Activated naive CD4-positive, alpha-beta T cell treated with anti-CD3 and anti-CD28 coated beads, Interleukin-2, amount 10 ng/mL, durations not matched to agents 7 days and 5 days (primary cell): ENCODE measurements at regions of chr7 and their contacts with region 1.

Region 1: GRCh38 chr7:31122649-31123058 is 70.5 kb downstream of the ADCYAP1R1 start:
- DNase-seq: peak; percentile 63
- H3K4me3 Mint-ChIP-seq: no peak overlapping the region
- H3K27ac Mint-ChIP-seq: no peak overlapping the region
- H3K4me1 Mint-ChIP-seq: no peaks in the 10 kb centered on the region
- H3K27me3 Mint-ChIP-seq: peaks cover 38% of the 10 kb centered on the region

Region 2: GRCh38 chr7:30800785-30801252 is 321.8 kb before region 1 on chr7:
- CTCF ChIA-PET with region 1: interaction called, 26 read pairs
- DNase-seq: peak; percentile 60
- H3K4me3 Mint-ChIP-seq: no peak overlapping the region
- H3K27ac Mint-ChIP-seq: no peak overlapping the region
- H3K4me1 Mint-ChIP-seq: peaks cover 24% of the 10 kb centered on the region
- H3K27me3 Mint-ChIP-seq: no peaks in the 10 kb centered on the region

Region 3: DNA sequence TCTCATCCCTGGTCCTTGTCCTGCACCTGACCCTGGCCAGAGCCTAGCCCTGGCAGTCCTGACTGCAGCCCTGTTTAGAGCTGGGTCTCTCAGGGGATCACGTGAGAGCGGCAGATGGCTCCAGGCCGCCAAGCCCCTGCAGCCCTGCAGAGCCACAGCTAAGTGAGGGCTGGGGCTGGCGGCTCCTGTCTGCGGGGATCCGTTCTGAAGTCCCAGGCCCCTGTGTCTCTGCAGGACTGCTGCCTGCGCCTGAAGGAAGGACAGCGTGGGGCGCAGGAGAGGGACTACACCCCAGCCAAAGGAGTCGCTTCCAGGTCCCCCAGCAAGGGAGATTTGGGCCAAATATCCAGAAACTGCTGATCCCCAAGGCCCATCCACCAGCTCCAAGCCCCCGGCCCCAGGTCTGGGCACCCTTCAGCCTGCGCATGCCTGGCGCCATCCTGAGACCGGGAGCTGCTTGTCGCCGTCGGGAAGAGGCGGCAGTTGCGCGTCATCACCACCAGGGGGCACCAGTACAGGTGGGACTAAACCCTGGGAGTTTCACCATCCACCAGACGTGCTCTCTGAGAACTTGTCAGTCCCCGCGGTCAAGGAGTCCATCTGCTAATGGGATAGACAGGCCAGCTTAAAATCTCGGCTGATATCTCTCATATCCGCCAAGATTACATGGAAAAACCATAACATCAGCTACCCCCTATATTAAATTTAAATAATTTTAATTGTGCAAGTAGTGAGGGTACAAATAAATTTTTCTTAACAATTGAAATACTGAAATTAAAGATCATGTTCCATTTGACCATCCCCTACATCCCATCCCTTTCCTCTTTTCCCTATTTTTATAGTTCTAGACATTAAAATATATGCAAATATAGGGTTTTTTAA is 184.0 kb before region 1 on chr7:
- CTCF ChIA-PET with region 1: interaction called, 15 read pairs
- DNase-seq: peak; percentile 74
- H3K4me3 Mint-ChIP-seq: no peak overlapping the region
- H3K27ac Mint-ChIP-seq: no peak overlapping the region
- H3K4me1 Mint-ChIP-seq: no peaks in the 10 kb centered on the region
- H3K27me3 Mint-ChIP-seq: peaks cover 36% of the 10 kb centered on the region

Region 4: GRCh38 chr7:30974605-30975255 is 147.9 kb before region 1 on chr7:
- CTCF ChIA-PET with region 1: interaction called, 14 read pairs
- DNase-seq: peak; percentile 63
- H3K4me3 Mint-ChIP-seq: no peak overlapping the region
- H3K27ac Mint-ChIP-seq: no peak overlapping the region
- H3K4me1 Mint-ChIP-seq: peaks cover 7% of the 10 kb centered on the region
- H3K27me3 Mint-ChIP-seq: peaks cover 39% of the 10 kb centered on the region

Region 5: DNA sequence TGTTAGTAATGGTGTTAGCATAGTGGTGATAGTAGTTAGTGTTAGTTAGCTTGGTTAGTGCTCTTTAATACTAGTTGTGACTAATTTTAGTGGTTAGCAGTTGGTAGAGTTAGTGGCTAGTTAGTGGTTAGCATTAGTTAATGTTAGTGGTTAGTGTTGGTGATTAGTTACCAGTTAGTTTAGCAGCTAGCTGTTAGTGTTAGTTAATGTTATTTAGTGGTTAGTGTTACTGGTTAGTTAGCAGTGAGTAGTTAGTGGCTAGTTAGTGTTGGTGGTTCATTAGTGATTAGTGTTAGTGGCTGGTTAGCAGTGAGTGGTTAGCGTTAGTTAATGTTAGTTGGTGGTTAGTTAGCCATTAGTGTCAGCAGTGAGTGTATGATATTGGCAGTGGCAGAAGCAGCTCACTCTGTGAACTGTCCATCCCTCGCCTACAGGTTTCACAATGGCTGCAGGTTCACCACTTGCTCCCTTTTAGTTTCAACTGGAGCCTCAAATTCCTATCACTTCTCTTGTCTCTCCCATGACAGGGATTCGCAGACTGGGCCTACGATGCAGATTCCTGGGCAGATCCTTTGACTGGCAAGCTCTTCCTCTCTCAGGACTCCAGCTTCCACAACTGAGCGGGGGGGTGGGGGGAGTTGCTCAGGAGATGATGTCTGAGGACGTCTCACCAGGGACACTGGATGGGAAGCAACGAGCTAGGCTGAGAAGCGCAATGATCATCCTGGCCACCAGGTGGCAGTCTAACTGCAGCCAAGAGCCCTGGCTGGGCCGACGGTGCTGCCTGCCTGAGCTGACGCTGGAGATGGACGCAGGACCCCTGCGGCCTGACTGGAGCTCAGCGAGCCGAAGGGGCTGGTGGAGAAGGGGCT is 139.4 kb before region 1 on chr7:
- CTCF ChIA-PET with region 1: interaction called, 218 read pairs
- DNase-seq: peak; percentile 83
- H3K4me3 Mint-ChIP-seq: no peak overlapping the region
- H3K27ac Mint-ChIP-seq: no peak overlapping the region
- H3K4me1 Mint-ChIP-seq: peaks cover 12% of the 10 kb centered on the region
- H3K27me3 Mint-ChIP-seq: peaks cover 41% of the 10 kb centered on the region

Region 6: GRCh38 chr7:31106303-31107120 is 16.1 kb before region 1 on chr7:
- CTCF ChIA-PET with region 1: interaction called, 15 read pairs
- DNase-seq: no peak
- H3K4me3 Mint-ChIP-seq: no peak overlapping the region
- H3K27ac Mint-ChIP-seq: no peak overlapping the region
- H3K4me1 Mint-ChIP-seq: no peaks in the 10 kb centered on the region
- H3K27me3 Mint-ChIP-seq: peaks cover 5% of the 10 kb centered on the region

Region 7: DNA sequence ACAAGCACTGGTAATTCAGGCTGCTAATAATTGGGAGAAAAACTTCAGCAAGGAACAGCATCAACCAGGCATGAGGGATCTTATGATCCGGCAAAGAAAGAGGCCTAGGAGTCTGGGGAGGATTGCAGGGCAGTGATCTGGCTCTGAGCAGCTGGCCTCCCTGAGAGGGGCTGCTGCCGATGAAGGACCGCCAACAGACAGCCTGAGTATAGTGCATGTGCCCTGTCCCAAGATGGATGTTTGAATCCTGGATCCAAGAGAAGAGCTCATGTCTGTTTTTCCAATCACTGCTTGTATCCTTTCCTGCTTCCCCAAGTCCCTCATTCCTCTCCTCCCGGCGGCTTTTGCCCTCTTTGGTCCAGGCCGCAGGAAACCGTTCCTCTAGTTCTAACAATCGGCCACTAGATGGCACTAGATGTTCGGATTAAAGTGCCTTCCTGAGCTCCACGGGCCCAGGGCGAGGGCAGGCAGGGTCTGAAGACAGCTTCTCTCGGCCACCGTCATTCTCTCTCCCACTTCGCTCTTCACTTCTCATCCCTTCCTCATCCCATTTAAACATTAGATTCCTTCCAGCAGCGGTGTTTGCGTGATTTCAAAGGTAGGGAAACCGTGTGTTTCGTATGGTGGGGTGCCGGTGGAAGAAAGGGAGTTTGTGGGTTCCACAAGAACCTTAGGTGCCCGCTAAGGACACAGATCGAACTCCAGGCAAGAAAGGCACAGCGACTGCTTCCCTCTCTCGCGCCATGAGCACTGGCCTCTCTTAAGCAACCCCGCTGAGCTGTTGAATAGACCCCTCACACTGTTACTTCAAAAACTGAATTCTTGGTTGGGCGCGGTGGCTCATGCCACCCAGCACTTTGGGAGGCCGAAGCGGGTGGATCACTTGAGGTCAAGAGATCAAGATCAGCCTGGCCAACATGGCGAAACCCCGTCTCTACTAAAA is 11.9 kb after region 1 on chr7:
- CTCF ChIA-PET with region 1: interaction called, 12 read pairs
- DNase-seq: peak; percentile 63
- H3K4me3 Mint-ChIP-seq: no peak overlapping the region
- H3K27ac Mint-ChIP-seq: no peak overlapping the region
- H3K4me1 Mint-ChIP-seq: no peaks in the 10 kb centered on the region
- H3K27me3 Mint-ChIP-seq: peaks cover 4% of the 10 kb centered on the region